Activated CD4-positive, alpha-beta T cell treated with anti-CD3 and anti-CD28 coated beads, Interleukin-2, amount 10 ng/mL, durations not matched to agents 24 days and 14 days (primary cell): ENCODE measurements at regions of chr5 and their contacts with region 1.

Region 1: DNA sequence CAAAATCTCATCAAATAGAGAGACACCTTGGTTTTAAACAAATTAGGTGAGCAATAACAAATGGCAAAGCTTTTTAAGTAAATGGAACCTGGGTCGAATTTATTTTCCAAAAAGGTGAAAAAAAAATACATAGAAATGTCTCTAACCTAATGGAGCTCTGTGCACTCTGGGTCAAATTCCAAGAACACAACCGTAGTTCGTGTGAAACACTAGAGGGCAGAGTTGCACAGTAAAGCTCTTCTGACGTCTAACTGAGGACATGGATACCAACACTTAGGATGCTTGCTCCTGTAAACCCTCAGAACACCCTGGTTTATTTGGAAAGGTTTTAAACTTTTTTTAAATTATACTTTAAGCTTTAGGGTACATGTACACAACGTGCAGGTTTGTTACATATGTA is 18.9 kb downstream of the MARCHF11 start:
- DNase-seq: peak; percentile 73
- H3K4me3 Mint-ChIP-seq: no peak overlapping the region
- H3K27ac Mint-ChIP-seq: no peak overlapping the region
- H3K4me1 Mint-ChIP-seq: no peaks in the 10 kb centered on the region
- H3K27me3 Mint-ChIP-seq: peaks cover 2% of the 10 kb centered on the region

Region 2: GRCh38 chr5:16552666-16553343 is 392.1 kb after region 1 on chr5:
- intact Hi-C with region 1: loop called (anchors 1 kb)
- DNase-seq: peak; percentile 84
- H3K4me3 Mint-ChIP-seq: no peak overlapping the region
- H3K27ac Mint-ChIP-seq: no peak overlapping the region
- H3K4me1 Mint-ChIP-seq: peaks cover 15% of the 10 kb centered on the region
- H3K27me3 Mint-ChIP-seq: no peaks in the 10 kb centered on the region